Activated CD8-positive, alpha-beta T cell treated with anti-CD3 and anti-CD28 coated beads for 36 hours (primary cell): ENCODE measurements at regions of chr17 and their contacts with region 1.

Region 1: DNA sequence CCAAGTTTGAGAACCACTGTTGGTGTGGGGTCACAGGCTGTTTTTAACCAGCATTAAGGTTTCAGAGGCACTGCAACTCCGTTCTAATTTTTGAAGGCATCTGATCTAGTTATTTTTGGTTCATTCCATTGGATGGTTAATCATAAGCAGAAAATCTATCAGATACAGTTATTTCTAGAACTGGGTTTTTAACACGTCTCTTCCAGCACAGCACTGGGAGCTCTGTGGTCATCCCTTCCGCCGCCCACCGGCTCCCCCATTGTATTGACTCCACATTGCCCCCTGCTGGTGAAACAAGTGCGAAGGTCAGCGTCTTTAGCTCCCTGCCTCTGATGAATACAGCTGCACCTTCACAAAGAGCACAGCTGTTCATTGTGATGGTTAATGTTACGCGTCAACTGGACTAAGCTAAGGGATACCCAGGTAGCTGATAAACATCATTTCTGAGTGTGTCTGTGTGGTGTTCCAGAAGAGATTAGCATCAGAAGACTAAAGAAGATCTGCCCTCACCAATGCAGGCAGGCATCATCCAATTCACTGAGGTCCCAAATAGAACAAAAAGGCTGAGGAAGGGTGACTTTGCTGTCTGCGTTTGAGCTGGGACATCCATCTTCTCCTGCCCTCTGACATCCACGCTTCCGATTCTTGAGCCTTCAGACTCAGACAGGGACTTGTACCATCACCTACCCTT is 8.5 kb downstream of the CCL18 start:
- DNase-seq: peak; percentile 89
- ATAC-seq: peak; percentile 85
- H3K4me3 Mint-ChIP-seq: no peak overlapping the region
- H3K27ac Mint-ChIP-seq: peak overlapping the region; percentile 82
- H3K4me1 Mint-ChIP-seq: peaks cover 49% of the 10 kb centered on the region
- H3K27me3 Mint-ChIP-seq: peaks cover 2% of the 10 kb centered on the region
- CTCF ChIP-seq: peak; percentile 90

Region 2: DNA sequence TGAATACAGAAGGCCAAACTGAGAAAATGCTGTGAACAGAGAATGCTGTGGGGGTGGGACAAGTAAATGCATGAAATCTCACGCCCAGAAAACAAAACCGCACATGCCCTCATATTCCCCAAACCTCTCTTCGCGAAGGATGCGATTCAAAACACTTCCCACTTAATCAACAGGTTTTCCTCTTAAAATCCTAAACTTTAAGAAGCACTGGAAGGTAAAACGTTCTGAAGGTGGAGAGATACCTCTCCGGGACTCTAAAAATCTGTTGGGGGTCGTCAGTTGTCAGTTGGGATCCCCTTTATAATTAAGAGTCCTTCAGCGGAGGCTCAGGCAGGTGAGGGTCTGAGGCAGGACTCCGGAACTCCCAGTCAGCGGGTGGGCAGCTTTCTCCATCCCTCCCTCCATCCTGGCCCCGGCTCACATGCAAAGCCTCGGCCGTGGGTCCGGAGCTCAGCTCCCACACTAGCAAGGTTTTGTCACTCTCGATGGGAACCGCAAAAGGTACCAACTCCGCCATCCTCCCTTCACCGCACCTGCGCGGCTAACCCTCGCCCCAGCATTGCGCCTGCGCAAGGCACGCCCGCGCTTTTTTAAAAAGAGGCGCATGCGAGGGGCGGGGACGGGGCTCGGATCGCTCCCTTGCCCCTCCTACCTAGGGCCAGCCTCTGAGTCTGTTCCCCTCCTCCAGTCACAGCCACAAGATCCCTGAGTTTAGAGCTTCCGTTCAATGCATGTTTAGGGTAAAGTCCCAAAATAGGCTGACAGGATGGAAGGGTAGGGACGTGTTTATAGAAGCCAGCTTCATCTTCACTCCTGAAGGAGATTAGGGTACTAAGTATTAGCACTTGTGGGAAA is 142.1 kb before region 1 on chr17 and contains the start of gene RDM1:
- CTCF ChIA-PET with region 1: no interaction called
- POLR2A ChIA-PET with region 1: no interaction called
- intact Hi-C with region 1: no loop called
- DNase-seq: peak; percentile 94
- ATAC-seq: peak; percentile 99
- H3K4me3 Mint-ChIP-seq: peak within 1 kb of the TSS; percentile 81
- H3K27ac Mint-ChIP-seq: peak within 1 kb of the TSS; percentile 80
- H3K4me1 Mint-ChIP-seq: peaks cover 21% of the 10 kb centered on the region
- H3K27me3 Mint-ChIP-seq: peaks cover 3% of the 10 kb centered on the region
- CTCF ChIP-seq: no peak
- total RNA-seq, gene RDM1: 12.6 to 16.0 TPM

Region 3: DNA sequence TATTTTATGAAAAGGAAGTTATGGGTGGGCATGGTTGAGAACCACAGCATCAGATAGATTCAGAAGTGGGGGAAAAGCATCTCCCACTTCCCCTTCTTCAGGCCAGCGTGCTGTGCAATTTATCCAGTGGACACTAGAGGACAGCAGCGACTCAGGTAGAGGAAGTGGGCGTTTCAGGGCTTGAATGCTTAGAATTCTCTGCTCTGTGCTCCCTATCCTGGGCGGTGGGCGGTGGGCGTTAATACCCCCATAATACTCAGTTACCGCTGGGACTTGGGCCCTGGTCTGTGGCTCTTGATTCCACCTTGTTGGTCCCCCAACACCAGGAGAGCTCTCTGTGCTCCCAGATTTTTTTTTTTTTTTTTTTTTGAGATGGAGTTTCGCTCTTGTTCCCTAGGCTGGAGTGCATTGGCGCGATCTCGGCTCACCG is 125.4 kb before region 1 on chr17:
- CTCF ChIA-PET with region 1: no interaction called
- POLR2A ChIA-PET with region 1: no interaction called
- intact Hi-C with region 1: no loop called
- DNase-seq: peak; percentile 76
- ATAC-seq: peak; percentile 95
- H3K4me3 Mint-ChIP-seq: no peak overlapping the region
- H3K27ac Mint-ChIP-seq: no peak overlapping the region
- H3K4me1 Mint-ChIP-seq: peaks cover 7% of the 10 kb centered on the region
- H3K27me3 Mint-ChIP-seq: no peaks in the 10 kb centered on the region
- CTCF ChIP-seq: peak; percentile 85

Region 4: DNA sequence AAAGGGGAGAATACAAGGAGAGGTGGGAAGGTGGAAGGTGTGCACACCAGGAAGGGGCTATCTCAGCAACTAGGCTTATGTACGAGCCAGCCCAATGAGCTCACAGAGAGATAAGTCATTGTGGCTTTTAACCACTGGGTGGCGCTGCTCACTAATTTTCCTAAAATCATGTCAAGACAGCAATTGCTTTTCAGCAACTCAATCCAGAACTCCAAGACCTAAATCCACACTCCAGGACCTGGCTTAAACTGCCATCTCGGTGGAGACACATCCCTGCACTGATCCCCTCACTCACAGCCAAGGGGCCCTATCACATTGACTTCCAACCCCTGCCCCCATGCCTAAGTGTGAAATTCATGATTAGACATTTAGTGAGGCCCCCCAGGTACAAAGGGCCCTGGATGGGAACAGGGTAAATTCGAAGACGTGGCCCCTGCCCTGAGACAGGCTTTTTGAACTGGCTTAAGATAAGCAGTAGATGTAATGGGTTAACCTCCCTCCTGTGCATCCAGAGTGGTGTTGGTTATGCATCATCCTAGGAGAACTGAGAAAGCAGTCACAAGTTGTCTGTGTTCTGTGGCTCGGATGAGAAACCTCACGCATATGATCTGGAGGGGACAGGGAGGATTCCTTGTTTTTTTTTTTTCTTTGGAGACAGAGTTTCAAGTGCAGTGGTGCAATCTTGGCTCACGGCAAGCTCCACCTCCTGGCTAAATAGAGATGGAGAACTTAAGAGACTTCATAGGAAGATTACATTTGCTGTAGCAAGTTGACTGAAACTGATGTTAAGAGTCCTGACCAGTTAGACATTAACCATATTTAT is 102.8 kb before region 1 on chr17:
- CTCF ChIA-PET with region 1: interaction called, 85 read pairs
- POLR2A ChIA-PET with region 1: interaction called, 4 read pairs
- intact Hi-C with region 1: loop called (anchors 5 kb)
- DNase-seq: peak; percentile 89
- ATAC-seq: peak; percentile 81
- H3K4me3 Mint-ChIP-seq: no peak overlapping the region
- H3K27ac Mint-ChIP-seq: no peak overlapping the region
- H3K4me1 Mint-ChIP-seq: no peaks in the 10 kb centered on the region
- H3K27me3 Mint-ChIP-seq: no peaks in the 10 kb centered on the region
- CTCF ChIP-seq: peak; percentile 85

Region 5: GRCh38 chr17:35981908-35982330 is 90.7 kb before region 1 on chr17:
- CTCF ChIA-PET with region 1: interaction called, 85 read pairs
- POLR2A ChIA-PET with region 1: interaction called, 4 read pairs
- intact Hi-C with region 1: no loop called
- DNase-seq: peak; percentile 30
- ATAC-seq: no peak
- H3K4me3 Mint-ChIP-seq: no peak overlapping the region
- H3K27ac Mint-ChIP-seq: no peak overlapping the region
- H3K4me1 Mint-ChIP-seq: no peaks in the 10 kb centered on the region
- H3K27me3 Mint-ChIP-seq: no peaks in the 10 kb centered on the region
- CTCF ChIP-seq: peak; percentile 41

Region 6: GRCh38 chr17:36057911-36058310 is 14.7 kb before region 1 on chr17:
- CTCF ChIA-PET with region 1: interaction called, 27 read pairs
- POLR2A ChIA-PET with region 1: interaction called, 3 read pairs
- intact Hi-C with region 1: no loop called
- DNase-seq: no peak
- ATAC-seq: no peak
- H3K4me3 Mint-ChIP-seq: no peak overlapping the region
- H3K27ac Mint-ChIP-seq: no peak overlapping the region
- H3K4me1 Mint-ChIP-seq: peaks cover 6% of the 10 kb centered on the region
- H3K27me3 Mint-ChIP-seq: peaks cover 8% of the 10 kb centered on the region
- CTCF ChIP-seq: no peak

Region 7: DNA sequence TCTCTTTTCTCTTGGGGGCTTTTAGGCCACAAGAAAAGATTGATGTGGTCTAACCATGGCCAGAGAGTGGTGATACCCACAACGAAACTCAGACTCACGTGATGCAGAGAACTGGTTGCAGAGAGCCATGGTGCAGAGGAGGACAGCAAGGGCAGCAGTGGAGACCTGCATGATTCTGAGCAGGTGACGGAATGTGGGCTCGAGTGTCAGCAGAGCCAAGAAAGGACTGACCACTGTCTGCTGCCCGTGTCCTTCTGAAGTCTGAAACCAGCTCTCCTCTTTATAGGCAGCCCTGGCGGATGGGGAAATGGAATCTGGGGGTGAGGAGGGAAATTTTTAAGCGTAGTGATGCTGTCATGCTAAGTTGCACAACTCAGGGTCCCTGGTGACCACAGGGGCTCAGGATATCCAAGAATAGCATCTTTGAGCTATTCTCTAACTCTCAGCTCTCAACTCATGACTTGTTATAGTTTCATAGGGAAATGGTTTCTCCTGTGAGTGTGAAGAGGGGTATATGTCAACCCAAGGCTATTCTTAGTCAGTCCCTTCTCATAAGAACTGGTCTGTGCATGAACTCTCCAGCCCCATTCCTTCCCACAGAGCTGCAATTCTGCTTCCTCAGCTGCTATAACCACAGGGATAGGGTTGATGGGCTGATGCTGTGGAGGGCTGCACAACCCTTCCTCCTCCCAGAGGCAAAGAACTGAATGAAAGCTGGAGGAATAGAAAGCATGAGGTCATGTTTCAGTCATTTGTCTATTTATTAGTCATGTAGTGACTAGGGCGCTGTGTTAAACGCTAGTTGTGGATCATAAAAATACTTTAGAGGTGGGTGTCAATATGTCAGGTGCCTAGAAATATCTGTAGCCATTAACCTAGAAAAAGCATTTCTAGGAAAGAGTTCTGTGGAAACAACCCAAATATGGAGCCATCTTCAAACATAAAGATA is 17.6 kb after region 1 on chr17 and contains the start of gene CCL3:
- CTCF ChIA-PET with region 1: interaction called, 32 read pairs
- POLR2A ChIA-PET with region 1: interaction called, 21 read pairs
- intact Hi-C with region 1: no loop called
- DNase-seq: peak; percentile 80
- ATAC-seq: peak; percentile 70
- H3K4me3 Mint-ChIP-seq: peak within 1 kb of the TSS; percentile 70
- H3K27ac Mint-ChIP-seq: peak within 1 kb of the TSS; percentile 95
- H3K4me1 Mint-ChIP-seq: peaks cover 66% of the 10 kb centered on the region
- H3K27me3 Mint-ChIP-seq: peaks cover 6% of the 10 kb centered on the region
- CTCF ChIP-seq: no peak
- total RNA-seq, gene CCL3: 230 to 253 TPM

Region 8: GRCh38 chr17:36095992-36096391 is 23.4 kb after region 1 on chr17:
- CTCF ChIA-PET with region 1: interaction called, 32 read pairs
- POLR2A ChIA-PET with region 1: interaction called, 21 read pairs
- intact Hi-C with region 1: no loop called
- DNase-seq: no peak
- ATAC-seq: no peak
- H3K4me3 Mint-ChIP-seq: no peak overlapping the region
- H3K27ac Mint-ChIP-seq: peak overlapping the region; percentile 22
- H3K4me1 Mint-ChIP-seq: peaks cover 49% of the 10 kb centered on the region
- H3K27me3 Mint-ChIP-seq: peaks cover 8% of the 10 kb centered on the region
- CTCF ChIP-seq: no peak

Region 9: DNA sequence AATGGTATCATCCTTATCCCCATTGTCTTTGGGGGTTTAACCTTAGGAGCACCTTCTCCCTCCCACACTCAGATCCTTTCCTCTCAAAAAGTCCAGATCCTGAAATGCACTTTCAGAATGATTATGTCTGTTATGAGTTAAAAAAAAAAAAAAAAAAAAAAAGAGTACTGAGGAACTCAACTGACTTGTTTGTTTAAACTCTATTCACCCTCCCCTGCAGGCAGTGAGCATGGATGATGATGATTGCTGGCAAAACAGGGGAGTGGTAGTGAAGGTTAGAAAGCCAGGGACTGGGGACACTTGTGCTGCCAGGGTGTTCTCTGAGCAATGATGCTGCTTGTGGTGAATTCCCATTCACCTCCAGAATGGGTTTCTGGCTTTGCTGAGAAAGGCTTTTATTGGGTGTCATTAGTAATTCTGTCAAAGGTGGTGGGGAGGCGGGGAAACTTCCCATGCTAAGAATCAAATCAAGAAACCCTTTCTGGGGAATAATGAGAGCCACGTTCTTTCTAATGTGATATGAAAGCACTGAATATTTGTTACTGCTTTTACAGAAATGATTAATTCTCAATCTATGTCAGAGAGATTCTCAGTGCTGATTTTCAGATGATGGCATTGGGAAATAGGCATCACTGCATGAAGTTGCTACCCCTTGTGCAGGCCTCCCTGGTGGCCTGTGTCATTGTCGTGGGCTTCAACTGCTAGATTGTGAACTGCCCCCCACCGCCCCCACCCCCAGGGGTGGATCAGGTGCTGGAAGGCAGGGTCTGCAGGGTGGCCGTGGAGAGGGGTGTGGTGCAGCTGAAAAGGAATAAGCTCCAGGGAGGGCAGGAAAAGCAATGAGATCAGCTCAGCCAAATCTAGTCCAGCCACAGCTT is 45.2 kb after region 1 on chr17:
- CTCF ChIA-PET with region 1: interaction called, 32 read pairs
- POLR2A ChIA-PET with region 1: no interaction called
- intact Hi-C with region 1: no loop called
- DNase-seq: peak; percentile 67
- ATAC-seq: peak; percentile 89
- H3K4me3 Mint-ChIP-seq: peak overlapping the region; percentile 31
- H3K27ac Mint-ChIP-seq: peak overlapping the region; percentile 89
- H3K4me1 Mint-ChIP-seq: peaks cover 37% of the 10 kb centered on the region
- H3K27me3 Mint-ChIP-seq: no peaks in the 10 kb centered on the region
- CTCF ChIP-seq: no peak